ENCODE measurements at regions of chr2 and their contacts with region 1.

Region 1: DNA sequence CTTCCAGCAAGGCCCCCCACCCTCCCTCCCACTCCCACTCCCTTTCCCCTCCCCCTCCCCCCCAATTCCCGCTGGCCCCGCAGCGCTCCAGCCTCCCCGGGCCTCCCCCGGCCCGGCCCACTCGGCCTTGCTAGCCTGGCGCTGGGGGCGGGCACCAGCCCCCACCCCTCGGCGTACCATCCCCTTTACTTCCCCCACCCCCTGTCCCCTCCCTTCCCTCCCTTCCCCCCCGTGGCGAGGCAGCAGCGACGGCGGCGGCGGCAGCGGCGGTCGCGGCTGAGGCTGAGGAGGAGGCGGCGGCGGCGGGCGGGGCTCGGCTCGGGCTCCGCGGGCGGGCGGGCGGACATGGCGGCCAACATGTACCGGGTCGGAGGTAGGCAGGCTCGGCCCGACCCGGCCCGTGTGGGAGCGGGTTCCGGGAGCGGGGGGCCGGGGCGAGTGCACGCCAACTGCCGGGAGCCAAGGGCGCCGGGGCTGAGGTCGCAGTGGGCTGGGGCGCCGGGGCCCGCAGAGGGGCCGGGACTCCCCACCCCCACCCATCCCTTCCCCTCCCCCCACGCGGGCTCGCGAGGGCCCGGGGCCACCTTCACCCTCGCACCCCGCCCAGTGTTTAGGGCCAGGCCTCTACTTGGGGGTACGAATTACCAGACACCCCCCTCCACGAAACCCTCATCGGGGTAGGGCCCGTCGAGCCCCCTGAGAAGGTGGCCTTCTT is at the start of gene MTA3:
- DNase-seq: peak; percentile 74
- ATAC-seq: peak; percentile 67
- H3K4me3 ChIP-seq: peak within 1 kb of the TSS; percentile 26 to 80 (median 70)
- H3K4me3 Mint-ChIP-seq: peak within 1 kb of the TSS; percentile 96
- H3K27ac ChIP-seq: peak within 1 kb of the TSS; percentile 18 to 67
- H3K27ac Mint-ChIP-seq: peak within 1 kb of the TSS; percentile 90
- H3K4me1 ChIP-seq: peaks cover 21 to 26% of the 10 kb centered on the region in 2 donors
- H3K4me1 Mint-ChIP-seq: peaks cover 31% of the 10 kb centered on the region
- H3K27me3 ChIP-seq: no peaks in the 10 kb centered on the region
- H3K27me3 Mint-ChIP-seq: no peaks in the 10 kb centered on the region
- CTCF ChIP-seq: no peak
- total RNA-seq, gene MTA3: 33.2 and 40.1 TPM in 2 replicates

Region 2: DNA sequence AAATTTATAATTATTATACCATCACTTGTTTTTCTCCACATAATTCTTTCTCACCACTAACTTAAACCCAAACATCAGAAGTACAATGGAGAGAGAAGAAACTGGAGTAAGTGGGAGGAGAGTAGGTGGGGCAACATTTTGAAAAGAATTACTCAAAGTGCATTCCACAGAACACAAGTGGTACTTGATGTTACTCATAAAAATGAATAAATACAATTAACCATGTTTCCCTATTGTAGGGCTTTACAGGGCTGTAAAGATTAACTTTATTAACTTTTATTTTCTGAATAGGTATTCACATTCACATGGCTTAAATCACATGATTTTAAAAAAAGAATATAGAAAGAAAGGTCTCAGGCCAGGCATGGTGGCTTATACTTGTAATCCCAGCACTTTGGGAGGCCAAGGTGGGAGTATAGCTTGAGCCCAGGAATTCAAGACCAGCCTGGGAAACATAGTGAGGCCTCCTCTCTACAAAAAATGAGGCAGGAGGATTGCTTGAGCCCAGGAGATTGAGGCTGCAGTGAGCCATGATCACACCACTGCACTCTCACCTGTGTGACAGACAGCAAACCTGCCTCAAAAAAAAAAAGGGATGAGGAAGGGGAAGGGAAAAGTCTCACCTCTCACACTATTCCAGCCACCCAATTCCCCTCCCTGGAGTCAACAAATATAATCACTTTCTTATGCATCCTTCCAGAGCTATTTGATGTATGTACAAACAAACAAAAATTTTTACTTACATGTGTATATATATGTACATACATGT is 121.9 kb before region 1 on chr2:
- CTCF ChIA-PET with region 1: no interaction called
- POLR2A ChIA-PET with region 1: no interaction called
- intact Hi-C with region 1: no loop called
- DNase-seq: no peak
- ATAC-seq: no peak
- H3K4me3 ChIP-seq: no peak overlapping the region
- H3K4me3 Mint-ChIP-seq: no peak overlapping the region
- H3K27ac ChIP-seq: no peak overlapping the region
- H3K27ac Mint-ChIP-seq: no peak overlapping the region
- H3K4me1 ChIP-seq: no peaks in the 10 kb centered on the region
- H3K4me1 Mint-ChIP-seq: no peaks in the 10 kb centered on the region
- H3K27me3 ChIP-seq: peaks cover 0 to 4% (median 2%) of the 10 kb centered on the region in 4 experiments
- H3K27me3 Mint-ChIP-seq: peaks cover 25% of the 10 kb centered on the region
- CTCF ChIP-seq: no peak

Region 3: GRCh38 chr2:42598656-42599055 is 30.1 kb after region 1 on chr2:
- CTCF ChIA-PET with region 1: interaction called, 3 read pairs
- POLR2A ChIA-PET with region 1: no interaction called
- intact Hi-C with region 1: loop called (anchors 5 kb)
- DNase-seq: no peak
- ATAC-seq: no peak
- H3K4me3 ChIP-seq: no peak overlapping the region
- H3K4me3 Mint-ChIP-seq: no peak overlapping the region
- H3K27ac ChIP-seq: no peak overlapping the region
- H3K27ac Mint-ChIP-seq: peak overlapping the region; percentile 95
- H3K4me1 ChIP-seq: peaks cover 4 to 15% of the 10 kb centered on the region in 2 donors
- H3K4me1 Mint-ChIP-seq: peaks cover 27% of the 10 kb centered on the region
- H3K27me3 ChIP-seq: no peaks in the 10 kb centered on the region
- H3K27me3 Mint-ChIP-seq: no peaks in the 10 kb centered on the region
- CTCF ChIP-seq: no peak

Region 4: GRCh38 chr2:43169987-43170386 is 601.4 kb after region 1 on chr2:
- CTCF ChIA-PET with region 1: no interaction called
- POLR2A ChIA-PET with region 1: interaction called, 13 read pairs
- intact Hi-C with region 1: no loop called
- DNase-seq: peak; percentile 59
- ATAC-seq: no peak
- H3K4me3 ChIP-seq: peak overlapping the region in 3 of 5 experiments; percentile 2 to 53 (median 35)
- H3K4me3 Mint-ChIP-seq: peak overlapping the region; percentile 87
- H3K27ac ChIP-seq: peak overlapping the region; percentile 85 to 91
- H3K27ac Mint-ChIP-seq: peak overlapping the region; percentile 100
- H3K4me1 ChIP-seq: peaks cover 69 to 84% of the 10 kb centered on the region in 2 donors
- H3K4me1 Mint-ChIP-seq: peaks cover 79% of the 10 kb centered on the region
- H3K27me3 ChIP-seq: no peaks in the 10 kb centered on the region
- H3K27me3 Mint-ChIP-seq: no peaks in the 10 kb centered on the region
- CTCF ChIP-seq: peak; percentile 46